Activated CD8-positive, alpha-beta memory T cell treated with anti-CD3 and anti-CD28 coated beads, Interleukin-2, amount 10 ng/mL, durations not matched to agents 7 days and 5 days (primary cell): ENCODE measurements at regions of chr1 and their contacts with region 1.

Region 1: GRCh38 chr1:153677718-153678505 is 576 bp upstream of the NPR1 start:
- DNase-seq: peak; percentile 63
- ATAC-seq: no peak
- H3K4me3 Mint-ChIP-seq: peak overlapping the region; percentile 72
- H3K27ac Mint-ChIP-seq: no peak overlapping the region
- H3K4me1 Mint-ChIP-seq: peaks cover 19% of the 10 kb centered on the region
- H3K27me3 Mint-ChIP-seq: peaks cover 56% of the 10 kb centered on the region

Region 2: GRCh38 chr1:153649863-153650235 is 28.1 kb before region 1 on chr1:
- CTCF ChIA-PET with region 1: no interaction called
- DNase-seq: no peak
- ATAC-seq: no peak
- H3K4me3 Mint-ChIP-seq: no peak overlapping the region
- H3K27ac Mint-ChIP-seq: peak overlapping the region; percentile 9
- H3K4me1 Mint-ChIP-seq: peaks cover 22% of the 10 kb centered on the region
- H3K27me3 Mint-ChIP-seq: no peaks in the 10 kb centered on the region

Region 3: DNA sequence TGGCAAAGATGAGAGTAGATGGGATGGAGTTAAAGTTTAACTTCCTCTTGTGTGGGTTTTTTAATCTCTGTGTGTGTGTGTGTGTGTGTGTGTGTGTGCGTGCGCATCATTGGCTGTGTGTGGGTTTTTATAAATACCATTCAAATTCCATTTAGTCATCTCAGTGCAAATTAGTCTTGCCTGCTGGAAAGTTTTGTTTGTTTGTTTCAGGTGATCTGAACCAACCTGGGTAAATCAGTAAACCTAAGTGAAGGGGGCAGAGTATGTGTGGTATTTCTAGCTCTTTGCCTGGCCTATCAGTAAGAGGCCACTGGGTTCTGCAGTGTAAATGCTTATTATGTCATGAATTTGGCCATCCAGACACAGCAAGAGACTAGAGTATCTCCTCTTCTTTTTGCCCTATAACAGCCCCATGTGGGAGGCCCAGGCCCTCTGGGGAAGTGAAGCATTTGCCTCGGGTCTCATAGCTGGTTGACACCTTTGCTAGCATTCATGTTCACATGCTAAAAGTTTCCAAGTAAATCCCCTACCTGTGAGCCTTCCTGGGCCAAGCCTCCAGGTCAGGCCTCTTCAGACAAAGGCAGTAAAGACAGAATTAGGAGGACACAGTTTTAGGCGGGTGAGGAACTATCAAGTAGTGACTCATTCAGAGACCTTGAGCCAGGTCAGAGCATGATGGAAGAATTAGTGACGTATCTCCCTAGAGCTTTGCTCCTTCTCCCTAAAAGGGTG is 64.7 kb after region 1 on chr1:
- CTCF ChIA-PET with region 1: interaction called, 11 read pairs
- DNase-seq: no peak
- ATAC-seq: no peak
- H3K4me3 Mint-ChIP-seq: no peak overlapping the region
- H3K27ac Mint-ChIP-seq: no peak overlapping the region
- H3K4me1 Mint-ChIP-seq: peaks cover 10% of the 10 kb centered on the region
- H3K27me3 Mint-ChIP-seq: no peaks in the 10 kb centered on the region

Region 4: DNA sequence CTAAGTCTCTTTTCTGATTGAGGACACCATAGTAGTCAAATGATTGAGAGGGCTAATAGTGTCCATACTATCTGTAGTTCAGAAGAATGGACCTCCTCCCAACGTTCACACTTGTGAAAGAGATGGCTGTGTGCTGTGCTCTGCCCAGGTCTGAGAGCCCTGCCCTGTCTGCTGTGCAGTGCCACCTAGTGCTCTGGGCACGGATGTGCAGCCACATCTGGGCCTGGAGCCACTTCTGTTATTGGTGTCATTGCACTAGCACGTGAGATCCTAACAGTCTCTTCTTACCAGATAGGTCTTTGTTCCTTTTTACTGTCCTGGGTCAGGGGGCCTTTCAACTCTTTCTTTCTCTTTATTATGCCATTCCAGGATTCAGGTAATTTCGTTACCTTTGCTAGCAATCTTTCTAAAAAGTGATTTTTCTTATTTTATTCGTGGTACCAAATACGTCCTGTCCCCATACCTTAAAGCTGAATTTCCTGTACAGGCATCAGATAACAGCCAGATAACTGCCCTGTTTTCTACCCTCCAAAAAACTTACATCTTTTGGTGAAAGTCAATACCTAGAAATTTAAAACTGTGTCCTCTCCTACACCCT is 71.6 kb after region 1 on chr1:
- CTCF ChIA-PET with region 1: interaction called, 11 read pairs
- DNase-seq: peak; percentile 88
- ATAC-seq: peak; percentile 100
- H3K4me3 Mint-ChIP-seq: no peak overlapping the region
- H3K27ac Mint-ChIP-seq: no peak overlapping the region
- H3K4me1 Mint-ChIP-seq: peaks cover 5% of the 10 kb centered on the region
- H3K27me3 Mint-ChIP-seq: no peaks in the 10 kb centered on the region